Sciatic nerve (tissue), 2 donors: ENCODE measurements at regions of chr1 and their contacts with region 1.

Region 1: DNA sequence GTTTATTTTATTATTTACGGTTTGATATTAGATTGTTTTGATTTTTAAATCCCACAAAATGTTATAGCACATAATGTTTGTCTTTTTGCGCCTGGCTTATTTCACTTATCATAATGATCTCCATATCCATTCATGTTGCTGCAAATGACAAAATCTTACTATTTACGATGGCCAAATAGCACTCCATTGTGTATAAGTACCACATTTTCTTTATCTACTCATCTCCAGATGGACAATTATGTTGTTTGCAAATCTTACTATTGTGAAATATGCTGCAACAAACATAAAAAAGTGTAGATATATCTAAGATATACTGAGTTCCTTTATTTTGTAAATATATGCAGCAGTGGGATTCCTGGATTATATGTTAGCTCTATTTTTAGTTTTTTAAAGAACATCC is 1568.3 kb downstream of the AMY1C start:
- DNase-seq: no peak
- ATAC-seq: no peak

Region 2: DNA sequence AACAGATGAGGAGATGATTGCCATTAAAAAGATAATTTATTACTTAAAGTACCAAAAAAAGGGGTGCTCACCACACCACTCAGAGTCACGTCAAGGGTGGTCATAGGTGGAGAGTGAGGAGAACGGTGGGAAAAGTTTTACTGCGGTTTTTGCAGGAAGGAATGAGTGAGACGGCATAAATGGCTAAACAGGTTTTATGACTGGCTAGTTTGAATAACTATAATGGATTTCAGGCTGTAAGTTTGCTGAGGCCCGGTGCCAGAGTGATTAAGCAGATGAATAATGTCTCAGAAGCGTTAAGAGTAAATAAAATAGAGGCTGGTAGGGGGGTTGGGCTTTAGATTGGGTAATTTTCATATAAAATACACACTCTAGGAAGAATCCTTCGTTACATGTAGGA is 230.5 kb before region 1 on chr1:
- intact Hi-C with region 1: no loop called
- DNase-seq: no peak
- ATAC-seq: no peak

Region 3: GRCh38 chr1:105254906-105255305 is 63.1 kb before region 1 on chr1:
- intact Hi-C with region 1: loop called (anchors 2 kb)
- DNase-seq: no peak
- ATAC-seq: no peak